ENCODE measurements at regions of chr5 and their contacts with region 1.

Region 1: GRCh38 chr5:56350598-56351170 is 117.6 kb upstream of the ANKRD55 start:
- DNase-seq: peak; percentile 83

Region 2: GRCh38 chr5:56070851-56071465 is 279.7 kb before region 1 on chr5:
- intact Hi-C with region 1: no loop called
- DNase-seq: no peak

Region 3: DNA sequence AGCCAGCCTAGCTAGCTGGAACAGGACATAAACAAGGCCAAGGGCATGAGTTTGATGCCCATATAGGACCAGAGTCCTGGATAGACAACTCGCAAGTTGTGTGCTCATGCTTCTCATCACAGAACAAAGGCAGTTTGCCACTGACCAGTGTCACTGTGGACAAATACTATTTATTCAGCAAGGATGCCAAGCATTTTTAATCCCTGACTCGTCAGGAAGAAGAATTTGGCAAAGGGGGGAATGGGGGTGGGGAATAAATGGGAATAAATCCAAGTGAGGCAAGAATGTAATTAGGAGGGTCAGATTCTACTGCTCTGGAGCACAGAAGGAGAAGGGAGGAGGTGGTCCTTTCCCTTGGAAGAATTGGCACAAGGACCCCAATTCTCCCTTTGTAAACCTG is 70.7 kb before region 1 on chr5:
- intact Hi-C with region 1: loop called (anchors 5 kb)
- DNase-seq: no peak

Region 4: GRCh38 chr5:56615361-56616153 is 264.9 kb after region 1 on chr5:
- intact Hi-C with region 1: loop called (anchors 10 kb)
- DNase-seq: no peak